Ascending aorta (tissue), 2 donors: ENCODE measurements at regions of chrX and their contacts with region 1.

Region 1: GRCh38 chrX:49915361-49916222 is 6.8 kb upstream of the CLCN5 start:
- DNase-seq: peak in 1 of 2 donors; percentile 70
- H3K4me3 ChIP-seq: no peak overlapping the region
- H3K27ac ChIP-seq: no peak overlapping the region
- H3K4me1 ChIP-seq: no peaks in the 10 kb centered on the region
- H3K27me3 ChIP-seq: no peaks in the 10 kb centered on the region
- CTCF ChIP-seq: peak; percentile 45 to 82 (median 70)

Region 2: DNA sequence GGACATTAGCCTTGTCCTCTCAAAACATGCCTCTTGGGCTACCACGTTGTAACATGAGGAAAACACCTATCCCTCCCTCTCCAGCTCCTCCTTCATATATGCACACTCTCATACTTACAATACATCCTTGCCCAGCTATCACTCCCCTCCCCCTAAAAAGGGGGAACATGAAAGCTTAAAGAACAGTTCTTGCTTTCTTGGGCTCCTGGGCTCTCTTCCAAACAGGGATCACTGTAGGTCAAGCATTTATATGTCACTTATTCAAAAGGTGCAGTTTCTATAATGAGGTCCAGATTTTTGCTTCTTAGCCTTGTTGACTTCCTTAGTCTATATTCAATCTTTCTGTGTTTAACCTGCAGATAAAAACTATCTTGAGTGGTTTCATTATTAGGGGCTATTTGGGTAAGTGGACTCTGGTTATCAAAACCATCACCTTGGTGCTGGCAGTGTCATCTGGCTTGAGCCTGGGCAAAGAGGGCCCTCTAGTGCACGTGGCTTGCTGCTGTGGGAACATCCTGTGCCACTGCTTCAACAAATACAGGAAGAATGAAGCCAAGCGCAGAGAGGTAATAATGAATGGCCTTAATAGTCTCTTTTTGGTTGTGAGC is 165.8 kb after region 1 on chrX:
- intact Hi-C with region 1: no loop called
- DNase-seq: no peak
- H3K4me3 ChIP-seq: no peak overlapping the region
- H3K27ac ChIP-seq: no peak overlapping the region
- H3K4me1 ChIP-seq: no peaks in the 10 kb centered on the region
- H3K27me3 ChIP-seq: no peaks in the 10 kb centered on the region
- CTCF ChIP-seq: peak in 1 of 3 experiments; percentile 15

Region 3: DNA sequence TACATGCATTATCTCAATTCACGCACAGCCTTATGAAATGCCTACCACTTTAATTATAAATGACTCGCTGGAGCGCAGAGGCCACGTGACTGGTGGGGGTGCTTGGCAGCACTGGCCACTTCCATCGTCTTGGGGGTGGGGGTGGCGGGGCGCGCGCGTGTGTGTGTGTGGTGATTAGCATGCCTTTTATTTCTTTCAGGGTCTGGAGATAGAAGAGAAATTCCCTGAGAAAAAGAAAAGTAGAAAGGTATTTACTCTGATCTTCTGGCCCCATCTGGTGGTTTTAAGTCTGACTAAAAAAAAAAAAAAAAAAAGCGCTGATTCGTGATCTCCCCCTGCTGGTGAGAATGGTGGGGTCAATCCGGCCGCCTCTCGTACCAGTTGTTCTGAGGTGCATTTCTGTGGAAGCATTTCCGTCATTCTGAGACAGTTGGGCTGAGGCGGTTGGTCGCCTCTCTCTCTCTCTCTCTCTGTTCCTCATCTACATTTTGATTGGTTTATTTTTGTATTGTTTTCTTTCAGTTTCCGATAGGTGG is 288.8 kb after region 1 on chrX and contains the start of gene CCNB3:
- intact Hi-C with region 1: loop called (anchors 5 kb)
- DNase-seq: peak in 1 of 2 donors; percentile 75
- H3K4me3 ChIP-seq: peak within 1 kb of the TSS; percentile 3 to 51
- H3K27ac ChIP-seq: no peak within 1 kb of the TSS
- H3K4me1 ChIP-seq: peaks cover 0 to 6% of the 10 kb centered on the region in 2 donors
- H3K27me3 ChIP-seq: no peaks in the 10 kb centered on the region
- CTCF ChIP-seq: peak; percentile 30 to 59 (median 57)
- total RNA-seq, gene CCNB3: 0.53 TPM

Region 4: GRCh38 chrX:50579955-50580354 is 664.4 kb after region 1 on chrX:
- intact Hi-C with region 1: loop called (anchors 5 kb)
- DNase-seq: no peak
- H3K4me3 ChIP-seq: no peak overlapping the region
- H3K27ac ChIP-seq: no peak overlapping the region
- H3K4me1 ChIP-seq: no peaks in the 10 kb centered on the region
- H3K27me3 ChIP-seq: no peaks in the 10 kb centered on the region
- CTCF ChIP-seq: peak in 2 of 3 experiments; percentile 31 to 51

Region 5: DNA sequence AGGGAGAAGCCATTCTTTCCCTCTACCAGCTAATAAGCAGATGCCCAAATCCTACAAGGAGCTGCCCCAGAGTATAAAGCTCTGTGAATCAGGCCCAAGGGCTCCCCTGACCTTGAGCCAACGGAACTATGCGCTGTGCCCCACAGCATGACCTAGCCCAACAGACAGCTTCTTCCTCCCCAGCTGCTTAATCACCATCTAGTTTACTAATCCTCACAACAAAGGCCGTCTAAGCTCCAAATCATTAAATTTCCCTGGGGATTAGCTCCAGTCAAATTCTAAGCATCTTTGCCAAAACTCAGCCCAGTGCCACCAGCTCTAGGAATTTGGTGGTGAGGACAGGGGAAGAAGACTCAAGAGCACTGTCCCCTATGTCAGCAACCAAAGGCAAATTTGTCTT is 785.3 kb after region 1 on chrX:
- intact Hi-C with region 1: loop called (anchors 5 kb)
- DNase-seq: no peak
- H3K4me3 ChIP-seq: no peak overlapping the region
- H3K27ac ChIP-seq: no peak overlapping the region
- H3K4me1 ChIP-seq: peaks cover 0 to 7% of the 10 kb centered on the region in 2 donors
- H3K27me3 ChIP-seq: no peaks in the 10 kb centered on the region
- CTCF ChIP-seq: no peak